ENCODE measurements at regions of chr19 and their contacts with region 1.

Region 1: GRCh38 chr19:11987405-11988281 is 22.8 kb downstream of the ZNF763 start:
- DNase-seq: peak; percentile 97
- H3K4me3 Mint-ChIP-seq: peak overlapping the region; percentile 93
- H3K27ac Mint-ChIP-seq: peak overlapping the region; percentile 93
- H3K4me1 Mint-ChIP-seq: peaks cover 18% of the 10 kb centered on the region
- H3K27me3 Mint-ChIP-seq: no peaks in the 10 kb centered on the region

Region 2: DNA sequence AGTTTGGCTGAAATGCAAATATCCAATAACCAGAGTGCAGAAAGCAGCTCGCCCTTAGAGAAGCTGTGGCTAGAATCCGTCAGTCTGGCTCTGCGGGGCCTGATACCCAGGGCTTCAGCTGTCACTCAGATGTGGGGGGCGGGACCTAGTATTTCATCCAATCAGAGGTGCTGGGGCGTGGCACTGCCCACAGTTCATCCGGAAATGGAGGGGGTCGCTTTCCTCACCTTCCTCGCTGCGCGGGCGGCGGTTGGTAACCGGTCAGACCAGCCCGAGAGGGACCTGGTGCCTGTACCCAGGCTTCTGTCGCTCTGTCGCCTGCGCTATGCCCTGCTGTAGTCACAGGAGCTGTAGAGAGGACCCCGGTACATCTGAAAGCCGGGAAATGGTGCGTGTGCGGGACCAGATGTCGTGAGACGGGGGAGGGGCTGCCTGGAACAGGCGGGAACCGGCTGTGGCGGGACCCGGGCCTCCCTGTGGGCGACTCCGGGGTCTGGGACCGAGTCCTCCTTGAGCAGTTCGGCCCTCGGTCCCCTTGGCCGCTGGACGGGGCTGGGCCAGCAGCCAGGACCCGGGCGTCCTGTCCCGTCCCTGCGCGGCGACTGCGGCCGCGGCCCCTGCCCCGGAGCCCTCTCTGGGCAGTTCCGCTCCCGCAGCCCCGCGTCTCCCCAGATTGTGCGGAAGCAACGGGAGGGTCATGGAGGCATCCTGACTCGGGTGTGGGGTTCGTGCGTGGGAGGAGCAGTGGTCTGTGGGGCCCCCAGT is 62.6 kb before region 1 on chr19 and contains the start of gene ZNF700:
- CTCF ChIA-PET with region 1: interaction called, 150 read pairs
- POLR2A ChIA-PET with region 1: interaction called, 3 read pairs
- intact Hi-C with region 1: loop called (anchors 1 kb)
- DNase-seq: peak; percentile 97
- H3K4me3 Mint-ChIP-seq: peak within 1 kb of the TSS; percentile 96
- H3K27ac Mint-ChIP-seq: peak within 1 kb of the TSS; percentile 99
- H3K4me1 Mint-ChIP-seq: peaks cover 35% of the 10 kb centered on the region
- H3K27me3 Mint-ChIP-seq: no peaks in the 10 kb centered on the region
- total RNA-seq, gene ZNF700: 12.9 to 13.0 TPM

Region 3: DNA sequence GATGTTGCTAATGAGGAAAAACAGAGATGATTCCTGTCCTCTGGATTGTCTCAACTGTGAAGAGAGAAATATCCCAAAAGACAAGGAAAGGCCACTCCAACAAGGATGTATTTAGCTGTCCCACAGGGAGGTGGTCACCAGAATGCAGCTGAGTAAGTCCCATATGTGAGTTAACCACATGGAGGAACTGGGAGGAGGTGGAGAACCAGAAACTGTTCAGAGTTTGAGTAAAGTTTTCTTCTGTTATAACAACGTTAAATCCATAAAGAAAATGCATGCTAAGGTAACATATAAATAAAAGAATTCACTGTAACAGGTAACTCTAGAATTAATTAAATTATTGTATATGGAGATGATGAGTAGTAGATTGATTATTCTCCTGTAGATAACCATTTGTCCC is 17.5 kb before region 1 on chr19:
- CTCF ChIA-PET with region 1: interaction called, 106 read pairs
- POLR2A ChIA-PET with region 1: interaction called, 3 read pairs
- intact Hi-C with region 1: no loop called
- DNase-seq: no peak
- H3K4me3 Mint-ChIP-seq: no peak overlapping the region
- H3K27ac Mint-ChIP-seq: no peak overlapping the region
- H3K4me1 Mint-ChIP-seq: peaks cover 9% of the 10 kb centered on the region
- H3K27me3 Mint-ChIP-seq: no peaks in the 10 kb centered on the region

Region 4: DNA sequence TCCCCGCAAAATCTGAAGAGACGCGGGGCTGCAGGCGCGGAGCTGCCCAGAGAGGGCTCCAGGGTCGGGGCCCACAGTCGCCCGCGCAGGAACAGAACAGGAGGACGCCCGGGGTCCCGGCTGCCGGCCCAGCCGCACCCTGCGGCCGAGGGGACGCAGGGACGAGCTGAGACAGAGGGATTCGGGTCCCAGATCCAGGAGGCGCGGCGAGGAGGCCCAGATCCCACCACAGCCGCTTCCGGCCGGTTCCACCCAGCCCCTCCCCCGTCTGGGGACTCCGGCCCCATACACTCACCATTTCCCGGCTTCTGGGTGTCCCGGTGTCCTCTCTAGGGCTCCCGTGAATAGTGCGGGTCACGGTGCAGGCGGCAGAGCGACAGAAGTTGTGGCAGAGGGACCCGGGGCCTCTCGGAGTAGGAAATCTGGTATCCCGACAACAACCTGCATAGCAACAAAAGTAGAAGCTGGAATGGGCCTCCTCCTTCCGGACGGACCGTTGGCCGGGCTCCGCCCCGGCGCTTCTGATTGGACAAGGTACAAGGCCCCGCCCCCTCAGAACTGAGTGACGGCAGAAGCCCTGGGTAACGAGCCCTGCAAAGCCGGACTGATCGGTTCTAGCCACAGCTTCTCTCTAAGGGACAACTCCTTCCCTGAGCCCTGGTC is 152.4 kb after region 1 on chr19 and contains the start of gene ZNF20:
- CTCF ChIA-PET with region 1: interaction called, 20 read pairs
- POLR2A ChIA-PET with region 1: no interaction called
- intact Hi-C with region 1: loop called (anchors 1 kb)
- DNase-seq: peak; percentile 95
- H3K4me3 Mint-ChIP-seq: peak within 1 kb of the TSS; percentile 93
- H3K27ac Mint-ChIP-seq: peak within 1 kb of the TSS; percentile 70
- H3K4me1 Mint-ChIP-seq: peaks cover 36% of the 10 kb centered on the region
- H3K27me3 Mint-ChIP-seq: no peaks in the 10 kb centered on the region
- total RNA-seq, gene ZNF20: 1.5 to 2.7 TPM

Measured in activated CD4-positive, alpha-beta memory T cell treated with anti-CD3 and anti-CD28 coated beads for 36 hours (primary cell).